ENCODE measurements at regions of chr11 and their contacts with region 1.

Region 1: DNA sequence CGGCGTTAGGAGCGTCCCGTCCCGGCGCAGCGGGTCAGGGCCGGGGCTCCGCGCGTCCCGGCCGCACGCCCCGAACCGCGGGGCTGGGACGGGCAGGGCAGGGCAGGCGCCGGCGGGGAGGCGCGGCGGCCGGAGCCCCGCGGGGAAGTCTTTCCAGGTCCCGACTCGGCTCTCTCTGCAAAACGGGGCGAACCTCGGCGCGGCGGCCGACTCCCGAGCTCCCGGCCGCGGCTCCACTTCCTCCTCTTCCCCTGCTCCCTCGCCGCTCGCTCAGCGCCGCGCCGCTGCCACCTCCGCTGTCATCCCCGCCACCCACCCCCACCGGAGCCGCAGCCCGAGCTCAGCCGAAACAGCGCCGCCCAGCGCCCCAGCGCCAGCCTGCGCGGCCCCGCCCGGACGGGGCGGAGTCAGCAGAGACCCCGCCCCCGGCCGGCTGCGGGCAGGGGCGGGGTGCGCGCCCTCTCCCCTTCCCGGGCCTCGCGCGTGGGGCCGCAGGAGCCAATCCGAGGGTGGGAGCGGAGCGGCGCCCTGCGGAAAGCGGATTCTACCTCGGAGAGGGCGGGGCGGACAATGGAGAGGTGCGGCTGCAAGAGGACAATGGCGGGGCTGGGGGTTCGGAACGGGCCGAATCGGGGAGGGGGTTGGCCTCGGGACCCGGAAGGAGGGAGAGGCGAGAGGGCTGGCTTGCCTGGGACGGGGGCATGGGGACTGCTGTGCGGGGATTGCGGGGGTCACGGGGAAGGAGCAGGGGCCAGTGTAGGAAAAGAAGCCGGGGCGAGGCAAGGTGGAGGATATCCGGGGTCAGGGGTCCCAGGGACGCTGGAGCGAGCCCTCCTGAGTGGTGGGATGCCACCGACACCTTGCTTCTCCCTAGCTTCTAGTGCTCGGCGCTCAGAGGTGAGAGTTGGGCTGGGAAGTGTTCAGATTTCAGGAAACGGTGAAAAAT is at the start of gene GDPD5:
- DNase-seq: peak; percentile 79
- H3K4me3 ChIP-seq: peak within 1 kb of the TSS; percentile 36 to 74 (median 68)
- H3K27ac ChIP-seq: no peak within 1 kb of the TSS
- H3K4me1 ChIP-seq: peaks cover 22% of the 10 kb centered on the region
- H3K27me3 ChIP-seq: no peaks in the 10 kb centered on the region
- CTCF ChIP-seq: peak; percentile 51 to 59
- POLR2A ChIP-seq: peak; percentile 14
- total RNA-seq, gene GDPD5: 50.1 and 79.2 TPM in 2 replicates

Region 2: DNA sequence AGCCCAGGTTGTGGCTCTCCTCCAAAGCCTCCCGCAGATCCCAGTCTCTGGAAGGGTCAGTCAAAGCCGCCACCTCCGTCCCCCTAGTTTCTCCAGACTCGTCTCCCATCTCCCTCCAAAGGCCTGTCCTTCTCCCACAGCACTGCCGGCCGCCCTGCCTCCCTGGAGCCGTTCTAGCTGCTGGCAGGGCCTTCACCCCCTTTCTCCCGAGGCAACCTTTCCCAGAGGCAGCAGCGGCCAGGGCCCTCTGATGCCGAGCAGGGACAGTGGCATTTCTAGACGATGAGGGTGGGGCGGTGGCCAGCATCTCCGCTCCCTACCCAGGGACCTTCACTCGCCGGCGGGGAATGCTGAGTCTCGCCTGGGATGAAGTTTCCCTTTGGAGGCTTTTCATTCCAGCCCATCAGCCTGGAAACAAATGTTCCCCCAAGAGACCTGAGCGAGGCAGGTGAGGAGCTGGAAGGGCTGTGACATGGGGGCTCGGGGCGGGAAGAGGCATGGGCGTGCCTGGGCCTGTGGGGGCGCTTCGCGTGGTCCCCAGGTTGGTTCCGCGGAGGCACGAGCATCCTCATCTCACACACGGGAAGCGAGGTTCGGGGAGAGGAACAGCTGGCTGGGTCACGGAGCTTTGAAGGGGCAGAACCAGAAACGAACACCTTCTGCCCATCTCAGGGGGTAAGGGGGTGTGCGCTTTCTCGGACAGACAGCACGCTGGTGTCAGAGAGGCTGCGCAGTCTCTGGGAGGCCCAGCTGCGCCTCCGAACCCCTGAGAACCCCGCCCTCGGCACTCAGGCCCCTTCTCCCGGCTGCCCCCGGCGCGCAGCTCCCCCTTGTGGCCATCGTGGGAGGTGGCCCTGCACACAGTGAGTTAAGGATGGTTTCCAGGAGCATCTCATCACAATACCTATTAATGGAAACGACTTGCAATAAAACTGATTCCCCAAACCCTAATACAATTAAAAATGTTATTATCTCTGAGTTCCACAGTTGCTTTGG is 74.7 kb before region 1 on chr11:
- CTCF ChIA-PET with region 1: interaction called, 115 read pairs
- POLR2A ChIA-PET with region 1: no interaction called
- dilution Hi-C with region 1: loop called (anchors 10 kb)
- intact Hi-C with region 1: no loop called
- DNase-seq: no peak
- H3K4me3 ChIP-seq: no peak overlapping the region
- H3K27ac ChIP-seq: no peak overlapping the region
- H3K4me1 ChIP-seq: no peaks in the 10 kb centered on the region
- H3K27me3 ChIP-seq: no peaks in the 10 kb centered on the region
- CTCF ChIP-seq: peak; percentile 63 to 68
- POLR2A ChIP-seq: no peak

Region 3: GRCh38 chr11:75492181-75492820 is 33.6 kb before region 1 on chr11:
- CTCF ChIA-PET with region 1: interaction called, 8 read pairs
- POLR2A ChIA-PET with region 1: no interaction called
- dilution Hi-C with region 1: loop called (anchors 5 kb)
- intact Hi-C with region 1: loop called (anchors 5 kb)
- DNase-seq: peak; percentile 47
- H3K4me3 ChIP-seq: no peak overlapping the region
- H3K27ac ChIP-seq: no peak overlapping the region
- H3K4me1 ChIP-seq: peaks cover 37% of the 10 kb centered on the region
- H3K27me3 ChIP-seq: no peaks in the 10 kb centered on the region
- CTCF ChIP-seq: no peak
- POLR2A ChIP-seq: no peak

Region 4: DNA sequence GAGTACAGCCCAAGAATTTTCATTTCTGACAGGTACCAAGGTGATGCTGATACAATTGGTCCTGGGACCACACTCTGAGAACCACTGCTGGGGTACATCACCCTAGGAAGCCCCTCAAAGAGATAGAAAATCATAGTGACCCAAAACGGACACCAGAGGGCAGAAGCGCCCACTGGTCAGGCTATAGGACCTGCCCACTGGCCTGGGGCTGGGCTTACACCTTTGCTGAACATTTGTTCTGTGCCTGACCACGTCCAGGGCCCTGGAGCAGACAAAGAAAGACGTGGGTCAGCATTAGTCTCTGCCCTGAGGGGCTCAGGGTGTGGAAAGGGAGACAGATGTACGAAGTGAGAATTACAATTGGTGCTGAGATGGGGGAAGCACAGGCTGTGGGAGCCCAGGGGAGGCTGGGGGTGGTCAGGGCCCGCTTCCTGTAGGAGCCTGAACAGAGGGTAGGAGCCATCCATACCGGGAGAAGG is 21.8 kb after region 1 on chr11:
- CTCF ChIA-PET with region 1: no interaction called
- POLR2A ChIA-PET with region 1: no interaction called
- dilution Hi-C with region 1: no loop called
- intact Hi-C with region 1: no loop called
- DNase-seq: peak; percentile 77
- H3K4me3 ChIP-seq: no peak overlapping the region
- H3K27ac ChIP-seq: no peak overlapping the region
- H3K4me1 ChIP-seq: no peaks in the 10 kb centered on the region
- H3K27me3 ChIP-seq: peaks cover 0 to 2% of the 10 kb centered on the region in 2 experiments
- CTCF ChIP-seq: peak; percentile 81 to 82
- POLR2A ChIP-seq: peak; percentile 7

Region 5: GRCh38 chr11:75562048-75562835 is 36.4 kb after region 1 on chr11 and contains the start of gene SERPINH1:
- CTCF ChIA-PET with region 1: no interaction called
- POLR2A ChIA-PET with region 1: no interaction called
- dilution Hi-C with region 1: no loop called
- intact Hi-C with region 1: no loop called
- DNase-seq: peak; percentile 71
- H3K4me3 ChIP-seq: peak within 1 kb of the TSS; percentile 50 to 84 (median 66)
- H3K27ac ChIP-seq: peak within 1 kb of the TSS; percentile 92
- H3K4me1 ChIP-seq: peaks cover 54% of the 10 kb centered on the region
- H3K27me3 ChIP-seq: no peaks in the 10 kb centered on the region
- CTCF ChIP-seq: no peak
- POLR2A ChIP-seq: peak; percentile 86
- total RNA-seq, gene SERPINH1: 384 and 409 TPM in 2 replicates